IMR-90 (cell line): ENCODE measurements at regions of chr1 and their contacts with region 1.

Region 1: GRCh38 chr1:157992031-157992832 is 1.2 kb upstream of the KIRREL1 start:
- DNase-seq: peak; percentile 63
- ATAC-seq: peak; percentile 33
- H3K4me3 ChIP-seq: no peak overlapping the region
- H3K27ac ChIP-seq: peak overlapping the region; percentile 0; the same call in 1 of the 2 replicates
- H3K4me1 ChIP-seq: peaks cover 10% of the 10 kb centered on the region
- H3K27me3 ChIP-seq: peaks cover 21% of the 10 kb centered on the region
- CTCF ChIP-seq: peak; percentile 99
- POLR2A ChIP-seq: 0 out of 2 replicates have a peak, but pooled peaks have one; percentile 23
- RAD21 ChIP-seq: peak; percentile 98

Region 2: GRCh38 chr1:157878059-157878458 is 114.2 kb before region 1 on chr1:
- CTCF ChIA-PET with region 1: no interaction called
- POLR2A ChIA-PET with region 1: no interaction called
- dilution Hi-C with region 1: no loop called
- in situ Hi-C with region 1: no loop called
- intact Hi-C with region 1: no loop called
- DNase-seq: peak; percentile 35
- ATAC-seq: peak; percentile 59
- H3K4me3 ChIP-seq: no peak overlapping the region
- H3K27ac ChIP-seq: no peak overlapping the region
- H3K4me1 ChIP-seq: no peaks in the 10 kb centered on the region
- H3K27me3 ChIP-seq: no peaks in the 10 kb centered on the region
- CTCF ChIP-seq: peak; percentile 37
- POLR2A ChIP-seq: no peak
- RAD21 ChIP-seq: peak; percentile 32; the same call in 1 of the 2 replicates

Region 3: GRCh38 chr1:158019171-158019868 is 27.1 kb after region 1 on chr1:
- CTCF ChIA-PET with region 1: interaction called, 8 read pairs
- POLR2A ChIA-PET with region 1: no interaction called
- dilution Hi-C with region 1: no loop called
- in situ Hi-C with region 1: no loop called
- intact Hi-C with region 1: loop called (anchors 1 kb)
- DNase-seq: peak; percentile 94
- ATAC-seq: peak; percentile 89
- H3K4me3 ChIP-seq: no peak overlapping the region
- H3K27ac ChIP-seq: peak overlapping the region; percentile 99
- H3K4me1 ChIP-seq: peaks cover 53% of the 10 kb centered on the region
- H3K27me3 ChIP-seq: no peaks in the 10 kb centered on the region
- CTCF ChIP-seq: 0 out of 2 replicates have a peak, but pooled peaks have one; percentile 6
- POLR2A ChIP-seq: no peak
- RAD21 ChIP-seq: peak; percentile 35; the same call in 1 of the 2 replicates

Region 4: GRCh38 chr1:158087320-158087927 is 95.2 kb after region 1 on chr1:
- CTCF ChIA-PET with region 1: interaction called, 13 read pairs
- POLR2A ChIA-PET with region 1: no interaction called
- dilution Hi-C with region 1: no loop called
- in situ Hi-C with region 1: loop called (anchors 5 kb)
- intact Hi-C with region 1: loop called (anchors 1 kb)
- DNase-seq: peak; percentile 77
- ATAC-seq: peak; percentile 95
- H3K4me3 ChIP-seq: no peak overlapping the region
- H3K27ac ChIP-seq: no peak overlapping the region
- H3K4me1 ChIP-seq: no peaks in the 10 kb centered on the region
- H3K27me3 ChIP-seq: no peaks in the 10 kb centered on the region
- CTCF ChIP-seq: peak; percentile 99
- POLR2A ChIP-seq: peak; percentile 43; the same call in 1 of the 2 replicates
- RAD21 ChIP-seq: peak; percentile 97

Region 5: GRCh38 chr1:158117854-158118704 is 125.8 kb after region 1 on chr1:
- CTCF ChIA-PET with region 1: interaction called, 35 read pairs
- POLR2A ChIA-PET with region 1: no interaction called
- dilution Hi-C with region 1: no loop called
- in situ Hi-C with region 1: no loop called
- intact Hi-C with region 1: loop called (anchors 1 kb)
- DNase-seq: peak; percentile 34
- ATAC-seq: peak; percentile 78
- H3K4me3 ChIP-seq: peak overlapping the region; percentile 7
- H3K27ac ChIP-seq: no peak overlapping the region
- H3K4me1 ChIP-seq: no peaks in the 10 kb centered on the region; the same call in 1 of the 2 replicates
- H3K27me3 ChIP-seq: peaks cover 37% of the 10 kb centered on the region
- CTCF ChIP-seq: peak; percentile 59
- POLR2A ChIP-seq: no peak
- RAD21 ChIP-seq: peak; percentile 34